ENCODE measurements at regions of chr2 and their contacts with region 1.

Region 1: DNA sequence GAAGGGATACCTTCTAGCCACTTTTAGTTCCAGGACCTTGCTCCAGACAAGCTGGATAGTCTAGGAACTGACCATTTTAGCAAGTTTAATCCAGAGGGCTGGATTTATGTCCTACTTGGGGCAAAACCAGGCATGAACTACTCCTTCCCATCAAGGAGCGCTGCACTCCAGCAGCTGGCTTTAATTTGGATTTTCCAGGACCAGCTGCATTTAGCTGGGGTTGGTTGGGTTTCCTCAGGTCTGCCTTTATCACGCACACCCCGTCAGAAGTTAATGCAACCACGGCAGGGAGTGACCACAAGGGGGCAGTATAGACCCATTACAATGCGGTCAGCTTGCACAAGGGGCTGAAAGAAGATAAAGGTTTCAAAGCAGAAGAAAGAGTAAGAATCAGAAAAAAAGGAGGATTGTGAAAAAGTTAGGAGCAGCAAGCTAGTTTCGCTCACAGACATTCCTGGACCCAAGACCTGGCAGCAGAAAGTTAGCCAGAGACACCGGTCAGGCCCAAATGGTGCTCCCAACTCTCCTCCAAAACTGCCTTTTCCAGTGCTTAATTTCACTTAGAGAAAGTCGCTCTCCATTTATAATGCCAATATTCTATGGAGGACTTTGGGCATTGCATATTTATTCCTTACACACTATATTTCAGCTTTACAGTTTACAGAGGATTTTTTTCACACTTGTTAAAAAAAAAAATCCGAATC is 40.1 kb downstream of the SLC4A1AP start:
- DNase-seq: peak; percentile 78 to 86
- H3K4me3 ChIP-seq: no peak overlapping the region
- H3K27ac ChIP-seq: no peak overlapping the region
- H3K4me1 ChIP-seq: peaks cover 0 to 24% of the 10 kb centered on the region in 2 donors
- H3K27me3 ChIP-seq: no peaks in the 10 kb centered on the region
- CTCF ChIP-seq: peak; percentile 84 to 97 (median 88)
- POLR2A ChIP-seq: no peak

Region 2: GRCh38 chr2:27663463-27664249 is 40.1 kb before region 1 on chr2 and contains the starts of genes SLC4A1AP and SUPT7L:
- intact Hi-C with region 1: no loop called
- DNase-seq: peak; percentile 61 to 62
- H3K4me3 ChIP-seq: peak within 1 kb of the TSS; percentile 62 to 84 (median 68)
- H3K27ac ChIP-seq: peak within 1 kb of the TSS; percentile 54 to 89 (median 88)
- H3K4me1 ChIP-seq: peaks cover 16 to 17% of the 10 kb centered on the region in 2 donors
- H3K27me3 ChIP-seq: no peaks in the 10 kb centered on the region
- CTCF ChIP-seq: peak in 1 of 6 experiments; percentile 12
- POLR2A ChIP-seq: no peak
- total RNA-seq, gene SLC4A1AP: 16.5 to 26.6 (median 23.4) TPM
- total RNA-seq, gene SUPT7L: 24.9 to 38.1 (median 29.6) TPM

Region 3: GRCh38 chr2:28406276-28407096 is 702.7 kb after region 1 on chr2:
- intact Hi-C with region 1: loop called (anchors 5 kb)
- DNase-seq: no peak
- H3K4me3 ChIP-seq: no peak overlapping the region
- H3K27ac ChIP-seq: peak overlapping the region in 1 of 3 donors; percentile 23
- H3K4me1 ChIP-seq: peaks cover 4 to 35% of the 10 kb centered on the region in 2 donors
- H3K27me3 ChIP-seq: no peaks in the 10 kb centered on the region
- CTCF ChIP-seq: no peak
- POLR2A ChIP-seq: no peak

Region 4: DNA sequence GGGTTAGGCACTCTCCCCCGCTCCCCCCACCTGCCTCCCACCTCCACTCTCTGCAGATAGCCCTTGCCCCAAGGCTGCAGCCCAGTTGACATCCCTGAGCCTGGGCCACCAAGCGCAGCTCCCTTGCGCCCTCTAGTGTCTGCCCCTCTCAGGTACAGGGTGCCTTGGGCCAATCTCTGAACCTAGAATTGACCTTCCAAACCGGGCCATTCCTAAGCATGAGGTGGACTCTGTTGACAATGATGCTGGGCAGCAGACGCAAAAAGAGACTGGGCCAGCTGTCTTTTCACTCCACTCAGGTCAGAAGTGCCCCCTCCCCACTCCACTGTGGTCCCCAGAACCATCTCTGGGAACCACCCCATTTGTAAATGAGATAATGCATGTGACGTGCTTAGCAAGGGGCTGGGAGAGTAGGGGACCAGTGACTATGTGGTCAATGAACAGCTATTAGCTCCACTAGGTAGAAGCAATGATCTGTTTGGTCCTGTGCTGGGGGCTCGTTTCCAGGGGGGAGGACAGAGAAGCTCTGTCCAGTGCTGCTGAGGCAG is 748.8 kb after region 1 on chr2:
- intact Hi-C with region 1: loop called (anchors 2 kb)
- DNase-seq: peak; percentile 66 to 71
- H3K4me3 ChIP-seq: no peak overlapping the region
- H3K27ac ChIP-seq: no peak overlapping the region
- H3K4me1 ChIP-seq: peaks cover 0 to 4% of the 10 kb centered on the region in 2 donors
- H3K27me3 ChIP-seq: no peaks in the 10 kb centered on the region
- CTCF ChIP-seq: peak; percentile 65 to 88 (median 76)
- POLR2A ChIP-seq: no peak